ENCODE measurements at regions of chr11 and their contacts with region 1.

Region 1: DNA sequence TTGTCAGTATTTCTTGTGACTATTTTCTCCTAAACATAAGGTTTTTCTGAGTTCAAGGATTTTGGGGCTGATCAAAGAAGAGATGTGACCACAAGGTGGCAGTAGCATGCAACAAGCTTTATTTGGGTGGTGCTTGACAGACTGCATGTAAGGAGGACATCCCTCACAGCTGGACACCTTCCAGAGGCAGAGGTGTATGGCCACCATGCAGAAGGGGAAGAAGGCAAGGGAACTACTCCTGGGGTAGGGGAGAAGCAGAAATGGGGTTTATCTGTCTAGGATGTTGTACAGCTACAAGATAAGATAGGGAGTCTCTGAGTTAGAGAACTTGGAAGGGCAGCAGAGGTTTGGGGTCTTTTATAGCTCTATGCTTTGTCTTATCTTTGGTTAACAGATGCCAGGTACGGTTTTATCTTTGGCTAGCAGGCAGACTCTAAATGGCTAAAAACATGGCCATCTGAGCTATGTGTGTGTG is 5.1 kb upstream of the BIRC2 start:
- DNase-seq: peak in 34 of 35 experiments; percentile 29 to 90 (median 62)
- ATAC-seq: peak; percentile 31 to 57 (median 54)
- H3K4me3 ChIP-seq: no peak overlapping the region
- H3K4me3 Mint-ChIP-seq: no peak overlapping the region
- H3K27ac ChIP-seq: no peak overlapping the region
- H3K27ac Mint-ChIP-seq: peak overlapping the region in 1 of 2 donors; percentile 54
- H3K4me1 ChIP-seq: peaks cover 6 to 11% of the 10 kb centered on the region in 2 experiments
- H3K4me1 Mint-ChIP-seq: peaks cover 18 to 30% (median 20%) of the 10 kb centered on the region in 3 donors
- H3K27me3 ChIP-seq: no peaks in the 10 kb centered on the region
- H3K27me3 Mint-ChIP-seq: no peaks in the 10 kb centered on the region

Region 2: GRCh38 chr11:102254045-102254444 is 87.8 kb before region 1 on chr11:
- CTCF ChIA-PET with region 1: no interaction called
- POLR2A ChIA-PET with region 1: no interaction called
- DNase-seq: peak in 1 of 35 experiments; percentile 16
- ATAC-seq: no peak
- H3K4me3 ChIP-seq: no peak overlapping the region
- H3K4me3 Mint-ChIP-seq: no peak overlapping the region
- H3K27ac ChIP-seq: no peak overlapping the region
- H3K27ac Mint-ChIP-seq: no peak overlapping the region
- H3K4me1 ChIP-seq: no peaks in the 10 kb centered on the region
- H3K4me1 Mint-ChIP-seq: no peaks in the 10 kb centered on the region
- H3K27me3 ChIP-seq: no peaks in the 10 kb centered on the region
- H3K27me3 Mint-ChIP-seq: no peaks in the 10 kb centered on the region

Region 3: GRCh38 chr11:102293873-102294601 is 47.8 kb before region 1 on chr11:
- CTCF ChIA-PET with region 1: interaction called, 15 to 23 read pairs
- POLR2A ChIA-PET with region 1: interaction called in 1 of 2 experiments, 4 read pairs
- DNase-seq: peak in 9 of 35 experiments; percentile 11 to 82 (median 30)
- ATAC-seq: peak; percentile 86 to 97 (median 92)
- H3K4me3 ChIP-seq: peak overlapping the region in 1 of 2 donors; percentile 35
- H3K4me3 Mint-ChIP-seq: peak overlapping the region; percentile 74 to 90 (median 88)
- H3K27ac ChIP-seq: peak overlapping the region; percentile 37
- H3K27ac Mint-ChIP-seq: peak overlapping the region; percentile 96
- H3K4me1 ChIP-seq: peaks cover 7 to 11% of the 10 kb centered on the region in 2 experiments
- H3K4me1 Mint-ChIP-seq: peaks cover 32 to 53% (median 34%) of the 10 kb centered on the region in 3 donors
- H3K27me3 ChIP-seq: no peaks in the 10 kb centered on the region
- H3K27me3 Mint-ChIP-seq: no peaks in the 10 kb centered on the region

Region 4: DNA sequence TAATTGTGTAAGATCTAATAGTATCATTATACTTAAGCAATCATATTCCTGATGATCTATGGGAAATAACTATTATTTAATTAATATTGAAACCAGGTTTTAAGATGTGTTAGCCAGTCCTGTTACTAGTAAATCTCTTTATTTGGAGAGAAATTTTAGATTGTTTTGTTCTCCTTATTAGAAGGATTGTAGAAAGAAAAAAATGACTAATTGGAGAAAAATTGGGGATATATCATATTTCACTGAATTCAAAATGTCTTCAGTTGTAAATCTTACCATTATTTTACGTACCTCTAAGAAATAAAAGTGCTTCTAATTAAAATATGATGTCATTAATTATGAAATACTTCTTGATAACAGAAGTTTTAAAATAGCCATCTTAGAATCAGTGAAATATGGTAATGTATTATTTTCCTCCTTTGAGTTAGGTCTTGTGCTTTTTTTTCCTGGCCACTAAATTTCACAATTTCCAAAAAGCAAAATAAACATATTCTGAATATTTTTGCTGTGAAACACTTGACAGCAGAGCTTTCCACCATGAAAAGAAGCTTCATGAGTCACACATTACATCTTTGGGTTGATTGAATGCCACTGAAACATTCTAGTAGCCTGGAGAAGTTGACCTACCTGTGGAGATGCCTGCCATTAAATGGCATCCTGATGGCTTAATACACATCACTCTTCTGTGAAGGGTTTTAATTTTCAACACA is 18.2 kb before region 1 on chr11:
- CTCF ChIA-PET with region 1: interaction called, 8 to 19 read pairs
- POLR2A ChIA-PET with region 1: interaction called in 1 of 2 experiments, 4 read pairs
- DNase-seq: no peak
- ATAC-seq: no peak
- H3K4me3 ChIP-seq: no peak overlapping the region
- H3K4me3 Mint-ChIP-seq: no peak overlapping the region
- H3K27ac ChIP-seq: peak overlapping the region; percentile 54
- H3K27ac Mint-ChIP-seq: peak overlapping the region; percentile 52 to 57
- H3K4me1 ChIP-seq: peaks cover 20 to 32% of the 10 kb centered on the region in 2 experiments
- H3K4me1 Mint-ChIP-seq: peaks cover 53 to 71% (median 61%) of the 10 kb centered on the region in 3 donors
- H3K27me3 ChIP-seq: no peaks in the 10 kb centered on the region
- H3K27me3 Mint-ChIP-seq: no peaks in the 10 kb centered on the region

Region 5: DNA sequence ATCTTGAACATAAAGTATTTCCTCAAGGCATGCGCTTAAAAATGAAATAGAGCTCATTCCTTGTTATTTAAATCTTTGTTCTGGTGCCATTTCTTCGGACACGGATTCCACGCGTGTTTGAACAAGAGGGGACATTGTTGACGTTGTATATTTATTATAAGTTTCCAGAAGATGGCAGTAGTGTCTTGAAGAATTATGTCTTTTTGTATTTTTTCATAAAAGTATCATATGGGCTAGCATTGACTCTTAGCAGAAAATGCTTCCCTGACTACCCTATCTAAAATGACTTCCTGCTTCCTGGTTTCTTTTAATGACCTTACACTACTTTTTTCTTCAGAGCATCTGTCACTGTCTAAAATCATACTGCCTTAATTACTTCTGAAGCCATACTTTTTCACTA is 25.5 kb after region 1 on chr11:
- CTCF ChIA-PET with region 1: interaction called, 25 to 29 read pairs
- POLR2A ChIA-PET with region 1: interaction called, 3 read pairs
- DNase-seq: peak in 1 of 35 experiments; percentile 53
- ATAC-seq: peak; percentile 57 to 80 (median 73)
- H3K4me3 ChIP-seq: no peak overlapping the region
- H3K4me3 Mint-ChIP-seq: peak overlapping the region in 1 of 3 donors; percentile 9
- H3K27ac ChIP-seq: no peak overlapping the region
- H3K27ac Mint-ChIP-seq: peak overlapping the region; percentile 76 to 81
- H3K4me1 ChIP-seq: peaks cover 0 to 3% of the 10 kb centered on the region in 2 experiments
- H3K4me1 Mint-ChIP-seq: peaks cover 33 to 50% (median 47%) of the 10 kb centered on the region in 3 donors
- H3K27me3 ChIP-seq: no peaks in the 10 kb centered on the region
- H3K27me3 Mint-ChIP-seq: no peaks in the 10 kb centered on the region

Region 6: DNA sequence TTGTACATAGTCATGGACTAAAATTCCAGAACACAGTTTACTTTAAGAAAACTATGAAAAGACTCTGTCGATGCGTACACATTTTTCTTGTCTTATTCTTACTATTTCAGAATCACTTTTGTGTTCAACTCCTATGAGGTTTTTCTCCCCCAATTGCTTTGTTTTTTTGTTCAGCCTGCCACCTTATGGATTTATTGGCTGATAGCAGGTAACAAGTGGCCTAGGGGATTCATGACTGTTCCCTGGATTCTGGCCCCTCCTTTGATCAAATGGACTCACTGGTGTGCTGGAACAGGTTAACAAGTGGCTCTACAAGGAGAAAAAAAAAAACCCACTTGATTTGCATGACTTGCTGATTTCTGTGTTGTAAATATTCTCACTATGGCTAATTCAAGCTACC is 272.6 kb after region 1 on chr11:
- CTCF ChIA-PET with region 1: interaction called, 9 to 35 read pairs
- POLR2A ChIA-PET with region 1: no interaction called
- DNase-seq: no peak
- ATAC-seq: no peak
- H3K4me3 ChIP-seq: no peak overlapping the region
- H3K4me3 Mint-ChIP-seq: no peak overlapping the region
- H3K27ac ChIP-seq: no peak overlapping the region
- H3K27ac Mint-ChIP-seq: no peak overlapping the region
- H3K4me1 ChIP-seq: peaks cover 0 to 2% of the 10 kb centered on the region in 2 experiments
- H3K4me1 Mint-ChIP-seq: peaks cover 0 to 6% (median 3%) of the 10 kb centered on the region in 3 donors
- H3K27me3 ChIP-seq: peaks cover 0 to 3% of the 10 kb centered on the region in 2 experiments
- H3K27me3 Mint-ChIP-seq: peaks cover 0 to 4% of the 10 kb centered on the region in 2 donors